ENCODE measurements at regions of chr14 and their contacts with region 1.

Region 1: DNA sequence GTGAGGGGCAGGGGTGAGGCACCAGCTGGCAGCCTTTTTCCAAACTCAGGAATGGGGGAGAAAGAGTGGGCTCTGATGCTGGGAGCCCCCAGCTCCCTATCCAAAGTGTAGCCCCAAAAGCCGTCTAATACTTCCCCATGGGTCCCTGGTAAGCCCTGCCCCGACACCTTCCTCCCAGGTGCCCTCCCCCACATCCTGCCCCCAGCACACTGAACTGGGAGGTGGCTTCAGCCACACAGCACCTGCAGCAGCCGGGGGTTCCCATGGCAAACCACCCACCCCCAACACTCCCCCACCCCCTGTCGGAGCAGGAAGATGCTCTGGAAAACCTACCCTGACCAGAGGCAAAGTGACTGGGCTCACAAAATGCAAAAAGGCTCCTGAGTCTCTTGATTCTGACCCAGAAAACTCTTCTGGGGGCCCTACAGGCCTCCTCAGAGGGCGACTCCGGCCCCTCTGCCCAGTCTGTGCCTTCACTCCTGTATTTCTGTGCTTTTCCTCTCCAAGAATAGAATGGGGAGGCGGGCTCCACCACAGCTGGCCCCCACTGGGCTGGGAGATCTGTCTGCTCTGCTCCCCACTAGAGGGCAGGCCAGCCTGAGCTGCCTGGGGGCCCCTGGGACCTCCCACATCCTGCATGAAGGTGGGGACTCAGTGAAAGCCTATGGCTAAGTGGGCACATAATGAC is 81.6 kb downstream of the ITPK1 start:
- DNase-seq: peak in 7 of 9 donors; percentile 15 to 31 (median 29)
- ATAC-seq: peak; percentile 71
- H3K4me3 ChIP-seq: no peak overlapping the region
- H3K4me3 Mint-ChIP-seq: peak overlapping the region; percentile 17 to 79 (median 51)
- H3K27ac ChIP-seq: no peak overlapping the region
- H3K27ac Mint-ChIP-seq: peak overlapping the region in 8 of 9 donors; percentile 65 to 91 (median 72)
- H3K4me1 ChIP-seq: peaks cover 13 to 17% of the 10 kb centered on the region in 2 donors
- H3K4me1 Mint-ChIP-seq: peaks cover 21 to 34% (median 26%) of the 10 kb centered on the region in 7 donors
- H3K27me3 ChIP-seq: no peaks in the 10 kb centered on the region
- H3K27me3 Mint-ChIP-seq: no peaks in the 10 kb centered on the region

Region 2: DNA sequence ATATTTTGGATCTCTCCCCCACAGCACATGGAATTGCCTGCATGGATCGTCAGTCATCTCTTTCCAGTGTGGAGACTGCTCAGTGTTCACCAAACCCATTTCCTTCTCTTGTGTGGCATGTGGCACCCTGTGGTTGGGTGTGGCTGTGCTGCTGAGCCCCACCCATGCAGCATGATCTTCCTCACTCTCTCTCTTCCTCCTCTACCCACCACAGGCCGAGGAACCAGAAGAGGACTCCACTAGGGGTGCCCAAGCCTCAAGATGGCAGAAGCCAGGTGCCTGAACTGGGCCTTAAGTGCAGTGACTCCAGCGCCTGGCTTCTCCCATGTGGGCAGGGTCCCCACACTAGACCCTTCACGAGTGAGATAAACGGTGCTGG is 1722.9 kb before region 1 on chr14:
- CTCF ChIA-PET with region 1: no interaction called
- POLR2A ChIA-PET with region 1: no interaction called
- intact Hi-C with region 1: no loop called
- DNase-seq: peak in 7 of 9 donors; percentile 52 to 70 (median 63)
- ATAC-seq: peak; percentile 74
- H3K4me3 ChIP-seq: peak overlapping the region; percentile 17
- H3K4me3 Mint-ChIP-seq: peak overlapping the region; percentile 7 to 79 (median 68)
- H3K27ac ChIP-seq: peak overlapping the region; percentile 68
- H3K27ac Mint-ChIP-seq: peak overlapping the region; percentile 74 to 99 (median 94)
- H3K4me1 ChIP-seq: peaks cover 38 to 41% of the 10 kb centered on the region in 2 donors
- H3K4me1 Mint-ChIP-seq: peaks cover 42 to 84% (median 66%) of the 10 kb centered on the region in 7 donors
- H3K27me3 ChIP-seq: no peaks in the 10 kb centered on the region
- H3K27me3 Mint-ChIP-seq: no peaks in the 10 kb centered on the region

Region 3: GRCh38 chr14:93137864-93138263 is 103.7 kb after region 1 on chr14:
- CTCF ChIA-PET with region 1: no interaction called
- POLR2A ChIA-PET with region 1: no interaction called
- intact Hi-C with region 1: loop called (anchors 1 kb)
- DNase-seq: no peak
- ATAC-seq: no peak
- H3K4me3 ChIP-seq: no peak overlapping the region
- H3K4me3 Mint-ChIP-seq: no peak overlapping the region
- H3K27ac ChIP-seq: no peak overlapping the region
- H3K27ac Mint-ChIP-seq: no peak overlapping the region
- H3K4me1 ChIP-seq: no peaks in the 10 kb centered on the region
- H3K4me1 Mint-ChIP-seq: peaks cover 2 to 6% (median 4%) of the 10 kb centered on the region in 7 donors
- H3K27me3 ChIP-seq: no peaks in the 10 kb centered on the region
- H3K27me3 Mint-ChIP-seq: no peaks in the 10 kb centered on the region

Region 4: DNA sequence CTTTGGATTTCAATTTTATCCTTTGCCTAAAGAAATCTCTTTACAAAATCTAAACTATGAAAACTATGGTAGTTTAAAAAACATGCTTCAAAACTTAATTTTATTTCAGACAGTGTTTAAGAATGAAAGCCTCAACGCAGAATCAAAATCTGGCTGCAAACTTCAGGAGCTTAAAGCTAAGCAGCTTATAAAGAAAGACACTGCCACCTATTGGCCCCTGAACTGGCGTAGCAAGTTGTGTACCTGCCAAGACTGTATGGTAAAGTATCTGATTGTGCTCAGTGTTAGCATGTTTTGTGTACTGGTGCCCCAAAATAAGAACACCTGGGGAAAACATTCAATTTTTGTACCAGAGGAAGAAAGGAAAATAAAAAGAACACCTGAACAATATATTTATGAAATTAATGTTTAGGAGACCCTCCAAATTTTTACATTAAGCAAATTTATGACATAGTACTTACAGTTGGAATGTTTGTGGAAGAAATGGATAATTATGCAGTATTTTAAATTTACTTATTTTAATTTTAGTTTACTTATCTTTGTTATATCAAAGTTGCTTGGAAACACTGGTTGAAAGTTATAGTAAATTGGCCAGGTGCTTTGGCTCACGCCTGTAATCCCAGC is 185.1 kb after region 1 on chr14:
- CTCF ChIA-PET with region 1: interaction called, 3 read pairs
- POLR2A ChIA-PET with region 1: no interaction called
- intact Hi-C with region 1: loop called in 1 of 2 experiments (anchors 1 kb)
- DNase-seq: peak in 7 of 9 donors; percentile 27 to 66 (median 56)
- ATAC-seq: peak; percentile 87
- H3K4me3 ChIP-seq: no peak overlapping the region
- H3K4me3 Mint-ChIP-seq: no peak overlapping the region
- H3K27ac ChIP-seq: no peak overlapping the region
- H3K27ac Mint-ChIP-seq: no peak overlapping the region
- H3K4me1 ChIP-seq: no peaks in the 10 kb centered on the region
- H3K4me1 Mint-ChIP-seq: peaks cover 0 to 4% (median 0%) of the 10 kb centered on the region in 7 donors
- H3K27me3 ChIP-seq: no peaks in the 10 kb centered on the region
- H3K27me3 Mint-ChIP-seq: no peaks in the 10 kb centered on the region

Measured in naive thymus-derived CD4-positive, alpha-beta T cell (primary cell).